Activated T-helper 2 cell treated with anti-CD3 and anti-CD28 coated beads, Interferon-gamma antibody, Interleukin-2, Interleukin-4, amounts not matched to agents 10 μg/mL and 5 μg/mL and 100 μg/mL, durations not matched to agents 14 hours and 24 hours and 36 hours (primary cell): ENCODE measurements at regions of chr6 and their contacts with region 1.

Region 1: GRCh38 chr6:149499066-149499465 is 14.3 kb upstream of the ZC3H12D start:
- DNase-seq: no peak
- H3K4me3 Mint-ChIP-seq: no peak overlapping the region
- H3K27ac Mint-ChIP-seq: peak overlapping the region; percentile 33
- H3K4me1 Mint-ChIP-seq: peaks cover 48% of the 10 kb centered on the region
- H3K27me3 Mint-ChIP-seq: no peaks in the 10 kb centered on the region

Region 2: GRCh38 chr6:149140137-149140909 is 358.7 kb before region 1 on chr6:
- intact Hi-C with region 1: loop called (anchors 5 kb)
- DNase-seq: no peak
- H3K4me3 Mint-ChIP-seq: peak overlapping the region; percentile 84
- H3K27ac Mint-ChIP-seq: peak overlapping the region; percentile 100
- H3K4me1 Mint-ChIP-seq: peaks cover 46% of the 10 kb centered on the region
- H3K27me3 Mint-ChIP-seq: no peaks in the 10 kb centered on the region